ENCODE measurements at regions of chr13 and their contacts with region 1.

Region 1: GRCh38 chr13:95403828-95404522 is 102.7 kb upstream of the ABCC4 start:
- DNase-seq: peak; percentile 78
- ATAC-seq: peak; percentile 80
- H3K4me3 ChIP-seq: peak overlapping the region in 4 of 5 experiments; percentile 15 to 53 (median 30)
- H3K4me3 Mint-ChIP-seq: peak overlapping the region; percentile 89
- H3K27ac ChIP-seq: no peak overlapping the region
- H3K27ac Mint-ChIP-seq: no peak overlapping the region
- H3K4me1 ChIP-seq: peaks cover 9% of the 10 kb centered on the region in 2 donors
- H3K4me1 Mint-ChIP-seq: peaks cover 9% of the 10 kb centered on the region
- H3K27me3 ChIP-seq: peaks cover 0 to 18% (median 8%) of the 10 kb centered on the region in 4 experiments
- H3K27me3 Mint-ChIP-seq: peaks cover 28% of the 10 kb centered on the region
- CTCF ChIP-seq: peak; percentile 93

Region 2: GRCh38 chr13:94674609-94675348 is 729.2 kb before region 1 on chr13:
- CTCF ChIA-PET with region 1: interaction called, 17 read pairs
- POLR2A ChIA-PET with region 1: no interaction called
- intact Hi-C with region 1: loop called (anchors 1 kb)
- DNase-seq: peak; percentile 27
- ATAC-seq: no peak
- H3K4me3 ChIP-seq: no peak overlapping the region
- H3K4me3 Mint-ChIP-seq: no peak overlapping the region
- H3K27ac ChIP-seq: no peak overlapping the region
- H3K27ac Mint-ChIP-seq: no peak overlapping the region
- H3K4me1 ChIP-seq: no peaks in the 10 kb centered on the region
- H3K4me1 Mint-ChIP-seq: no peaks in the 10 kb centered on the region
- H3K27me3 ChIP-seq: peaks cover 0 to 13% (median 6%) of the 10 kb centered on the region in 4 experiments
- H3K27me3 Mint-ChIP-seq: peaks cover 17% of the 10 kb centered on the region
- CTCF ChIP-seq: peak; percentile 78

Region 3: DNA sequence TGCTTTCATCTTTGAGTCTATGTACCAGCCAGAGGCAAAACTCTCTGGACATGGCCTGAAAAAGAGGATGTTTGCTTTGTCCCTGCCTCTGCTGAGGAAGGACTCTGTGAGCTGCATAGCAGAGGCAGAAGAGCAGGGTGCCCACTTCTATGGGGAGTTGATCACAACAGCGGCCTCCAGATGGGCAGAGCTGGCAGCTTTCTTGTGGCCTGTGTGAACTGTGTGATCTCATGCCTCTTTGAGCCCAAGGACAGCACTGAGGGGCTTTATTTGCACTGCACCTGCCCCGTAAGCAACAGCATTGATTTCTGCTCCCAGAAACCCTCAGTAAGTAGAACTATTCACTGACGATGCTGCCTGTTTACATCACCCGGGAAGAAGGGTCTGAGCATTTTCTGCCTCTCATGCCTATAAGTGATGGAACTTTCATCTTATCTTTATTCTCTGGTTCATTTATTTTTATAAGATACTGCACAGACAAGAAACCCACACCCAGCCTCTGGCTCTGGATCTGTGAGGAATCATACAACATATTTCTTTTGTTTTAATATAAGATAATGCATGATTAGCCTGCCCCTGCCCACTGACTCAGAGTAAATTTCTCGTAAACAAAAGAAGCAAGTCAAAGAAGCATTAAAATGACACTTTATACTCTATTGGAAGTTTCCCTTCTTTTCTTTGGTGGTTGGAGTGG is 447.4 kb before region 1 on chr13:
- CTCF ChIA-PET with region 1: no interaction called
- POLR2A ChIA-PET with region 1: no interaction called
- intact Hi-C with region 1: no loop called
- DNase-seq: no peak
- ATAC-seq: no peak
- H3K4me3 ChIP-seq: no peak overlapping the region
- H3K4me3 Mint-ChIP-seq: no peak overlapping the region
- H3K27ac ChIP-seq: no peak overlapping the region
- H3K27ac Mint-ChIP-seq: no peak overlapping the region
- H3K4me1 ChIP-seq: no peaks in the 10 kb centered on the region
- H3K4me1 Mint-ChIP-seq: no peaks in the 10 kb centered on the region
- H3K27me3 ChIP-seq: no peaks in the 10 kb centered on the region
- H3K27me3 Mint-ChIP-seq: peaks cover 7% of the 10 kb centered on the region
- CTCF ChIP-seq: no peak

Region 4: GRCh38 chr13:95128045-95128643 is 275.8 kb before region 1 on chr13:
- CTCF ChIA-PET with region 1: no interaction called
- POLR2A ChIA-PET with region 1: no interaction called
- intact Hi-C with region 1: no loop called
- DNase-seq: no peak
- ATAC-seq: no peak
- H3K4me3 ChIP-seq: no peak overlapping the region
- H3K4me3 Mint-ChIP-seq: no peak overlapping the region
- H3K27ac ChIP-seq: no peak overlapping the region
- H3K27ac Mint-ChIP-seq: no peak overlapping the region
- H3K4me1 ChIP-seq: no peaks in the 10 kb centered on the region
- H3K4me1 Mint-ChIP-seq: no peaks in the 10 kb centered on the region
- H3K27me3 ChIP-seq: no peaks in the 10 kb centered on the region
- H3K27me3 Mint-ChIP-seq: no peaks in the 10 kb centered on the region
- CTCF ChIP-seq: no peak

Region 5: DNA sequence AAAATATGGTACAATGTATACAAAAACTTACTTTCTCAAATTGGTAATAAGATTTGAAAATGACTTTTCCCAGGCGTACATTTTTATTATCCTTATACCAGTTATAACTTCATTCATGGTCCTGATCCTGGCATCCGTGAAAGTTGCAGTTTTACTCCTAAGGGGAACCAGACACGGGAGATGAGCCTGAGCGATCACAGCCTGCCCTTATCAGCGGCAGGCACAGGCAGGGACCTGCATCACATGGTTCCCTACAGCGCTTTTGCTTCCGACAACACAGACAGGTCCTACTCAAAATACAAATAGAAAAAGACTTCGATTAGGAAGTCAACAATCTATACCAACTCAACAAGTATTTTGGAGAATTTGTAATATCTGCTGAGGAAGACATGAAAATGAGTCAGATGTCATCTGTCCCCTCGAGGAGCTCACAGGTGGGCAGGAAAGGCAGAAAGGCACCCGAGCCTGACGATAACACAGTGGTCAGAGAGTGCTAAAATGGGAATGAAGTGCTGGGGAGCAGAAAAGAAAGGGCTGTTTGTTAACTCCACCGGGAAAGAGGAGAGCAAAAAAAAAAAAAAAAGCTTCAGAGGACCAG is 196.1 kb before region 1 on chr13:
- CTCF ChIA-PET with region 1: interaction called, 10 read pairs
- POLR2A ChIA-PET with region 1: no interaction called
- intact Hi-C with region 1: no loop called
- DNase-seq: no peak
- ATAC-seq: peak; percentile 56
- H3K4me3 ChIP-seq: peak overlapping the region in 2 of 5 experiments; percentile 4 to 38
- H3K4me3 Mint-ChIP-seq: peak overlapping the region; percentile 68
- H3K27ac ChIP-seq: no peak overlapping the region
- H3K27ac Mint-ChIP-seq: peak overlapping the region; percentile 42
- H3K4me1 ChIP-seq: peaks cover 6 to 7% of the 10 kb centered on the region in 2 donors
- H3K4me1 Mint-ChIP-seq: peaks cover 12% of the 10 kb centered on the region
- H3K27me3 ChIP-seq: no peaks in the 10 kb centered on the region
- H3K27me3 Mint-ChIP-seq: no peaks in the 10 kb centered on the region
- CTCF ChIP-seq: no peak

Region 6: GRCh38 chr13:95378603-95379002 is 25.4 kb before region 1 on chr13:
- CTCF ChIA-PET with region 1: interaction called, 28 read pairs
- POLR2A ChIA-PET with region 1: interaction called, 3 read pairs
- intact Hi-C with region 1: loop called (anchors 1 kb)
- DNase-seq: no peak
- ATAC-seq: no peak
- H3K4me3 ChIP-seq: no peak overlapping the region
- H3K4me3 Mint-ChIP-seq: no peak overlapping the region
- H3K27ac ChIP-seq: no peak overlapping the region
- H3K27ac Mint-ChIP-seq: no peak overlapping the region
- H3K4me1 ChIP-seq: peaks cover 0 to 8% of the 10 kb centered on the region in 2 donors
- H3K4me1 Mint-ChIP-seq: peaks cover 8% of the 10 kb centered on the region
- H3K27me3 ChIP-seq: peaks cover 0 to 22% (median 6%) of the 10 kb centered on the region in 4 experiments
- H3K27me3 Mint-ChIP-seq: peaks cover 29% of the 10 kb centered on the region
- CTCF ChIP-seq: no peak

Region 7: GRCh38 chr13:95754069-95754468 is 350.1 kb after region 1 on chr13:
- CTCF ChIA-PET with region 1: no interaction called
- POLR2A ChIA-PET with region 1: no interaction called
- intact Hi-C with region 1: no loop called
- DNase-seq: no peak
- ATAC-seq: no peak
- H3K4me3 ChIP-seq: no peak overlapping the region
- H3K4me3 Mint-ChIP-seq: no peak overlapping the region
- H3K27ac ChIP-seq: no peak overlapping the region
- H3K27ac Mint-ChIP-seq: no peak overlapping the region
- H3K4me1 ChIP-seq: no peaks in the 10 kb centered on the region
- H3K4me1 Mint-ChIP-seq: peaks cover 2% of the 10 kb centered on the region
- H3K27me3 ChIP-seq: no peaks in the 10 kb centered on the region
- H3K27me3 Mint-ChIP-seq: no peaks in the 10 kb centered on the region
- CTCF ChIP-seq: no peak

Region 8: GRCh38 chr13:95784161-95784899 is 380.4 kb after region 1 on chr13:
- CTCF ChIA-PET with region 1: no interaction called
- POLR2A ChIA-PET with region 1: no interaction called
- intact Hi-C with region 1: no loop called
- DNase-seq: no peak
- ATAC-seq: no peak
- H3K4me3 ChIP-seq: no peak overlapping the region
- H3K4me3 Mint-ChIP-seq: no peak overlapping the region
- H3K27ac ChIP-seq: no peak overlapping the region
- H3K27ac Mint-ChIP-seq: no peak overlapping the region
- H3K4me1 ChIP-seq: no peaks in the 10 kb centered on the region
- H3K4me1 Mint-ChIP-seq: no peaks in the 10 kb centered on the region
- H3K27me3 ChIP-seq: no peaks in the 10 kb centered on the region
- H3K27me3 Mint-ChIP-seq: no peaks in the 10 kb centered on the region
- CTCF ChIP-seq: no peak

Region 9: DNA sequence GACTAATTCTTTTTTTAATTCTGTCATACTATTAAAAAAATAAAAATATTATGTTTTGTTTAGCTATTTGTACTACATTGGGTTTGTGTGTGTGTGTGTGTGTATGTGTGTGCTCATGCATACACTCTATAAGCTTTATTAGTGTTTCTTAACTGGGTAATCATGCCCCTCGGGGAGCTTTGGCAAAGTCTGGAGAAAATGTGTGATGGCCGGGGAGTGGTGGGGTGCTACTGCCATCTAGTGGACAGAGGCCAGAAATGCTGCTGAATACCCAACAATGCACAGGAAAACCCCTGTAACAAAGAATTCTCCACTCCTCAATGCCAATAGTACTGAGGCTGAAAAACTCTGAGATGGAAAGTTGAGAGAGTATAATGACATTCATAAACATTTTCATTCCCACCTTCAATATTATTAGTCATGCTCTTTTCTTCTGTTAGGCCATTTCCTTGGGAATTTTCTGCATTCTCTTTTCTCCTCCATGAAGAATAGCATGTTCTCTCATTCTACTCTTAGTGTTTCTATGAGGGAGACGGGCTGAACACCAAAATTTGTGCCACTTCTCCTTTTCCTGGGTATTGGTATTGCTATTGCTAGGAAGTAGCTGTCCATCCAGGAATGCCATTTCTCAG is 430.3 kb after region 1 on chr13:
- CTCF ChIA-PET with region 1: interaction called, 19 read pairs
- POLR2A ChIA-PET with region 1: no interaction called
- intact Hi-C with region 1: loop called (anchors 5 kb)
- DNase-seq: peak; percentile 71
- ATAC-seq: peak; percentile 81
- H3K4me3 ChIP-seq: no peak overlapping the region
- H3K4me3 Mint-ChIP-seq: no peak overlapping the region
- H3K27ac ChIP-seq: no peak overlapping the region
- H3K27ac Mint-ChIP-seq: no peak overlapping the region
- H3K4me1 ChIP-seq: no peaks in the 10 kb centered on the region
- H3K4me1 Mint-ChIP-seq: peaks cover 2% of the 10 kb centered on the region
- H3K27me3 ChIP-seq: no peaks in the 10 kb centered on the region
- H3K27me3 Mint-ChIP-seq: no peaks in the 10 kb centered on the region
- CTCF ChIP-seq: peak; percentile 98